ENCODE measurements at regions of chr1 and their contacts with region 1.

Region 1: DNA sequence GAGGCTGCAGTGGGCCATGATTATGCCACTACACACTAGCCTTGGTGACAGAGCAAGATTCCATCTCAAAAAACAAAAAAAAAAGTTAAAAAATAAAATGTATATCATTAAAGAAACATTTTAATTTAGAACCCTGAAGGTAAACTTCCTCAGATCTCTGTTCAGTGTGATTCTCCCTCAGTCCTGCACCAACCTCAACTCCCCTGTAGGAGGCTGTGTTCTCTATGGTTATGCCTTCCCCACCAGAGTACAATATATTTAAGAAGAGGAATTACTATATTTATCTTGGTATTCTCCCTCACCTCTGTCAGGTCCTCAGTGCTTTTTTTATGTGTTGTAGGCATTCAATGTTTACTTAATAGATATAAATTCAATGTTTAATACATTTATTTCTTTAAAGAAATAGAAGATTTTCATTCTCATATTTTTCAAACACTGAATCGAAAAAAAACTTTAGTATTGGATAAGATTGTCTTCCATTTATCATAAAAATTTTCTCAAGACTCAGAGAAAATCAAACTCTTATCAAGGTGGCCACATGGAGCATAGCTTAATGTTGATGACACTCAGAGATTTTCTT is 4.8 kb upstream of the LRRC8B start:
- DNase-seq: peak in 1 of 2 donors; percentile 46
- H3K4me3 ChIP-seq: no peak overlapping the region
- H3K27ac ChIP-seq: no peak overlapping the region
- H3K4me1 ChIP-seq: peaks cover 0 to 14% (median 7%) of the 10 kb centered on the region in 4 donors
- H3K27me3 ChIP-seq: no peaks in the 10 kb centered on the region
- CTCF ChIP-seq: peak in 4 of 7 experiments; percentile 41 to 67 (median 54)
- EP300 ChIP-seq: no peak
- POLR2A ChIP-seq: no peak

Region 2: GRCh38 chr1:89605692-89606091 is 85.8 kb after region 1 on chr1:
- intact Hi-C with region 1: loop called (anchors 10 kb)
- DNase-seq: no peak
- H3K4me3 ChIP-seq: no peak overlapping the region
- H3K27ac ChIP-seq: no peak overlapping the region
- H3K4me1 ChIP-seq: peaks cover 0 to 11% (median 4%) of the 10 kb centered on the region in 4 donors
- H3K27me3 ChIP-seq: no peaks in the 10 kb centered on the region
- CTCF ChIP-seq: no peak
- EP300 ChIP-seq: no peak
- POLR2A ChIP-seq: no peak

Measured in stomach (tissue), 19 donors.